CD4-positive, alpha-beta T cell (primary cell): ENCODE measurements at regions of chr1 and their contacts with region 1.

Region 1: GRCh38 chr1:904310-904950 is 19.3 kb upstream of the SAMD11 start:
- DNase-seq: peak; percentile 77 to 94 (median 84)
- ATAC-seq: peak; percentile 94
- H3K4me3 ChIP-seq: peak overlapping the region; percentile 2
- H3K4me3 Mint-ChIP-seq: peak overlapping the region; percentile 80
- H3K27ac ChIP-seq: no peak overlapping the region
- H3K27ac Mint-ChIP-seq: no peak overlapping the region
- H3K4me1 ChIP-seq: peaks cover 24% of the 10 kb centered on the region
- H3K4me1 Mint-ChIP-seq: peaks cover 11% of the 10 kb centered on the region
- H3K27me3 ChIP-seq: peaks cover 28 to 34% of the 10 kb centered on the region in 2 experiments
- H3K27me3 Mint-ChIP-seq: peaks cover 39% of the 10 kb centered on the region
- CTCF ChIP-seq: peak; percentile 71

Region 2: GRCh38 chr1:921011-921837 is 16.8 kb after region 1 on chr1:
- CTCF ChIA-PET with region 1: interaction called, 4 read pairs
- POLR2A ChIA-PET with region 1: no interaction called
- intact Hi-C with region 1: loop called in 1 of 2 experiments (anchors 2 kb)
- DNase-seq: peak in 8 of 14 experiments; percentile 25 to 76 (median 53)
- ATAC-seq: peak; percentile 55
- H3K4me3 ChIP-seq: no peak overlapping the region
- H3K4me3 Mint-ChIP-seq: peak overlapping the region; percentile 48
- H3K27ac ChIP-seq: no peak overlapping the region
- H3K27ac Mint-ChIP-seq: no peak overlapping the region
- H3K4me1 ChIP-seq: peaks cover 44% of the 10 kb centered on the region
- H3K4me1 Mint-ChIP-seq: peaks cover 17% of the 10 kb centered on the region
- H3K27me3 ChIP-seq: peaks cover 43 to 57% of the 10 kb centered on the region in 2 experiments
- H3K27me3 Mint-ChIP-seq: peaks cover 62% of the 10 kb centered on the region
- CTCF ChIP-seq: no peak

Region 3: DNA sequence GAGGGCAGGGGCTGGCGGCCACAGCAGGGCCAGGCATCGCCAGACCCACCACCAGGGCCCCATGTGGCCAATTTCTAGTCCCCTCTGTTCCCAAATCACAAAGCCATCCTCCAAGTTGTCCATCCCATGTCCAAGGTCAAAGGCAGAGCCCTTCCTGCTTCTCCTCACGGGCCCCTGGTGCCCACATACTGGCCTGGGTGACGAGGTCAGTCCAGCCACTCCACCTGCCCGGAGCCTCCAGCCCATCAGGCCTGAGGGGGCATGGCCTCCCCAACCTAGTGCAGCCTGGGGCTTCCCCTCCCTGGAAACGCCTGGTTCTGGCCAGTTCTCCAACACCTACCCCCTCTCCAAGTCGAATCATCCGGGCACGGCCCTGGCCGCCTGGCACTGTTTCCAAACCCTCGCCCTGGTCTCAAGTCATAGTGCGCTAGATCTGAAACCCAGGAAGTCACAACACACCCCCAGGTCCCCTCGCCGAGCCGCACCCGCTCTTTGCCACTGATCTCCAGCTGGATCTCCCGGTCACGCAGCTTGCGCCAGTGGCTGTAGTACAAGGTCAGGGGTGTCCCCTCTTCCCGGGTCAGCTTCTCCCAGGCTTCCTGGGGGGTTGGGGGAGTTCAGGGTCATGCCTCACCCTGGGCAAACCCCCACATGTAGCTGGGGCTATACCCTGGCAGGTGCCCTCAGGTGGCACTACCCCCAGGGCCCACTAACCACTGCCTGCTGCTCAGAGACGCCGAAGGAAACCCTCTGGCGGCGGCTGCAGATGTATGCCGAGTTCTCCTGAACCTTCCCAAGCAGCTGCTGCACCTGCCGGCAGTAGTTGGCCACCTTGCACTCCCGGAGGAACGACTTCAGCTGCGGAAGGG is 41.5 kb after region 1 on chr1:
- CTCF ChIA-PET with region 1: no interaction called
- POLR2A ChIA-PET with region 1: no interaction called
- intact Hi-C with region 1: no loop called
- DNase-seq: no peak
- ATAC-seq: no peak
- H3K4me3 ChIP-seq: no peak overlapping the region
- H3K4me3 Mint-ChIP-seq: peak overlapping the region; percentile 38
- H3K27ac ChIP-seq: no peak overlapping the region
- H3K27ac Mint-ChIP-seq: no peak overlapping the region
- H3K4me1 ChIP-seq: peaks cover 20% of the 10 kb centered on the region
- H3K4me1 Mint-ChIP-seq: peaks cover 5% of the 10 kb centered on the region
- H3K27me3 ChIP-seq: peaks cover 13 to 24% of the 10 kb centered on the region in 2 experiments
- H3K27me3 Mint-ChIP-seq: peaks cover 11% of the 10 kb centered on the region
- CTCF ChIP-seq: no peak

Region 4: DNA sequence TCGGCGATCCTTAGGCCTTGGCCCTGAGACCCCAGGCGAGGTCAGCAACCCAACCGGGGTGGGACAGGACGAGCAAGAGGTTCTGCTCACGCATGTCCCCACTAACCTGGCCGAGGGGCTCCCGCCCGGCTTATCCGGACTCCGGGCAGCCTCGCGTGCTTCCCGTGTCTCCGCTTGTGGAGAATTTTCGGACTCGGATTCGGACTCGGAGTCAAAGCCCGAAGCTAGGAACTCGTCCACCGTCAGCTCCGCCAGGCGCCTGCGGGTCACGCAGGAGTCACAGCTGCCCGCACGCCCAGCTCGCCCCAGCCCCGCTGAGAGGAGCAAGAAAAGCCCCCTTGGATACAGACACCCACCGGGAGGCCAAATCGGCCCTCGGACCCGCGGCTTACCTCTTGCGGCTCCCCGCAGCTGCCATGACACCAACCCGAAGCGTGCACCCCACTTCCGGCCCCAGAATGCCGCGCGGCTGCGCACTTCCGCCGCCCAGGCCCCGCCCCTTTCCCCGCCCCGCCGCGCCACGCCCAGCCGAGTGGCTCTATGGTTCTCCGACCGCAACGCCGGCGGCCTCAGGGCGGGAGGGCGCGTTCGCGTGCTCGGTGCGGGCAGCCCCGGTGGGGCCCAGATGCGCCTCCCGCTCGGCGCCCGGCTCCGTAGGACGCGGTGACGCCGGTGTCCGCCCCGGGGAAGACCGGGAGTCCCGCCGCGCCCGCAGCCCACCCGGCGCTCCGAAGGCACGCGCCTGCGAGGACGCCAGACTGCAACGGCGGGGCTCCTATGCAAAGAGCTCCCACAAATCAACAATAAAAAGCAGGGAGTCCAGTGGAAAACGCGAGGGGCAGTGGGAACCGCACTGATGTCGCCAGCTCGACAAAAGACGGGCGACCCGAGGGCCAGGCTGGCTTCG is 54.6 kb after region 1 on chr1 and contains the start of gene NOC2L:
- CTCF ChIA-PET with region 1: interaction called, 3 read pairs
- POLR2A ChIA-PET with region 1: no interaction called
- intact Hi-C with region 1: loop called in 1 of 2 experiments (anchors 5 kb)
- DNase-seq: peak; percentile 88 to 99 (median 97)
- ATAC-seq: peak; percentile 84
- H3K4me3 ChIP-seq: peak within 1 kb of the TSS; percentile 95
- H3K4me3 Mint-ChIP-seq: peak within 1 kb of the TSS; percentile 90
- H3K27ac ChIP-seq: peak within 1 kb of the TSS; percentile 47 to 72
- H3K27ac Mint-ChIP-seq: peak within 1 kb of the TSS; percentile 58
- H3K4me1 ChIP-seq: peaks cover 41% of the 10 kb centered on the region
- H3K4me1 Mint-ChIP-seq: peaks cover 16% of the 10 kb centered on the region
- H3K27me3 ChIP-seq: no peaks in the 10 kb centered on the region
- H3K27me3 Mint-ChIP-seq: no peaks in the 10 kb centered on the region
- CTCF ChIP-seq: no peak
- total RNA-seq, gene NOC2L: 50.2 to 52.0 TPM

Region 5: GRCh38 chr1:975896-976683 is 71.7 kb after region 1 on chr1:
- CTCF ChIA-PET with region 1: interaction called, 4 read pairs
- POLR2A ChIA-PET with region 1: no interaction called
- intact Hi-C with region 1: loop called (anchors 1 kb)
- DNase-seq: peak in 13 of 14 experiments; percentile 41 to 84 (median 68)
- ATAC-seq: peak; percentile 97
- H3K4me3 ChIP-seq: no peak overlapping the region
- H3K4me3 Mint-ChIP-seq: no peak overlapping the region
- H3K27ac ChIP-seq: no peak overlapping the region
- H3K27ac Mint-ChIP-seq: no peak overlapping the region
- H3K4me1 ChIP-seq: peaks cover 11% of the 10 kb centered on the region
- H3K4me1 Mint-ChIP-seq: peaks cover 7% of the 10 kb centered on the region
- H3K27me3 ChIP-seq: peaks cover 12 to 22% of the 10 kb centered on the region in 2 experiments
- H3K27me3 Mint-ChIP-seq: peaks cover 16% of the 10 kb centered on the region
- CTCF ChIP-seq: peak; percentile 89

Region 6: DNA sequence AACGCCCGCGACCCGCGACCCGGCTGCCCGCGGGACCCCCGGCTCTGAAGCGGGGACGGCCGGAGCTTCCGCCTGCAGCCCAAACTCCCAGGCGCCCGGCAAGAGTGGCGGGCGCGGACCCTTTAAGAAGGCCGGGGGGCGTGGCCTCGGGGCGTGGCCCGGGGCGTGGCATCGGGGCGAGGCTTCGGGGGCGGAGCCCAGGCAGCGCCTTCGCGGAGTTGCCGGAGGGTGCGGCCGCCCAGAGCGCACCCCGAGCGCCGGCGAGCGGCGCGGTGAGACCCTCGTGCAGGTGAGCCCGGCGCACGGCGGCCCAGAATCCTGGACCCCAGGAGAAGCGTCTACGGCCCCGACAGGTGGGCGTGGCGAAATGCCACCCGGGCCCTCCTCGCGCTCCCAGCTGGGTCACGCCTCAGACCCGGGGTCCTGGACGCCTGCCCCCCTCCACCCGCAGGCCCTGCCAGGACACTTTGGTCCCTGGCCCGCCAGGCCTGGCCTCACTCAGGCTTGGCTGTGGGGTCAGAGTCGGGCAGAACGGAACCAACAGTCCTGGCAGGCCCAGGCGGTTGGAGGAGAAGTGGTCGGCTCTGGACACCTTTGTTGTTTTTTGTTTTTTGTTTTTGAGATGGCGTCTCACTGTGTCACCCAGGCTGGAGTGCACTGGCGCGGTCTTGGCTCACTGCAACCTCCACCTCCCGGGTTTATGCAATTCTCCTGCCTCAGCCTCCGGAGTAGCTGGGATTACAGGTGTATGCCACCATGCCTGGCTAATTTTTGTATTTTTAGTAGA is 155.3 kb after region 1 on chr1:
- CTCF ChIA-PET with region 1: no interaction called
- POLR2A ChIA-PET with region 1: no interaction called
- intact Hi-C with region 1: loop called in 1 of 2 experiments (anchors 10 kb)
- DNase-seq: peak; percentile 78 to 94 (median 88)
- ATAC-seq: peak; percentile 76
- H3K4me3 ChIP-seq: peak overlapping the region; percentile 24
- H3K4me3 Mint-ChIP-seq: no peak overlapping the region
- H3K27ac ChIP-seq: no peak overlapping the region
- H3K27ac Mint-ChIP-seq: no peak overlapping the region
- H3K4me1 ChIP-seq: peaks cover 41% of the 10 kb centered on the region
- H3K4me1 Mint-ChIP-seq: peaks cover 4% of the 10 kb centered on the region
- H3K27me3 ChIP-seq: peaks cover 44 to 52% of the 10 kb centered on the region in 2 experiments
- H3K27me3 Mint-ChIP-seq: peaks cover 40% of the 10 kb centered on the region
- CTCF ChIP-seq: no peak